Spleen (tissue), 13 donors: ENCODE measurements at regions of chr17 and their contacts with region 1.

Region 1: DNA sequence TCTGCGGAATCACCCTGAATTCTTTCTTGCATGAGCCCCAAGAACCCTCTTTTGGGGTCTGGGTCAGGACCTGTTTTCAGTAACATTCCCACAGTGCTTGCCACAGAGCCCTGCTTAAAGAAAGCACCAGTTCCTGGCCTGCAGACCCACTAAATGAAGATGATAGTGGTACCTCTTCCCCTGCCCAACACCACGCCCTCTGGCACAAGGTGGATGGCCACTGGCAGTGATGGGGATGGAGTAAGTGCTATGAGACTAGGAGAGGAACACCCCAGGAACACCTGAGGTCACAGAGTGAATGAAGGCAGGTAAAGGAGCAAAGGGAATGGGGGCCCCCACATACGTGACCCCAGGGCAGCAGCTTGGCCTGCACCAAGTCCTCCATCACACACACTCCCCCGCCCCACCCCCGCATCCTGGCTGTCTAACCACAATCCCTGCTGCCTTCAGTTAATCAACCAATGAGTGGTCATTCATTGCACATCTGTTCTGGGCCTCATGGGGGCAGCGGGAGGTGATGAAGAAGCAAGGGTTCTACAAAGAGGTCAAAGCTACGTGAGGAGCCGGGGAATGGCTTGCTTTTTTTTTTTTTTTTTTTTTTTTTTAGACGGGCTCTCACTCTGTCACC is 3.9 kb upstream of the PPY start:
- DNase-seq: no peak
- H3K4me3 ChIP-seq: no peak overlapping the region
- H3K27ac ChIP-seq: no peak overlapping the region
- H3K4me1 ChIP-seq: peaks cover 0 to 7% (median 0%) of the 10 kb centered on the region in 6 donors
- H3K27me3 ChIP-seq: peaks cover 0 to 34% (median 6%) of the 10 kb centered on the region in 7 donors
- CTCF ChIP-seq: no peak
- POLR2A ChIP-seq: no peak

Region 2: DNA sequence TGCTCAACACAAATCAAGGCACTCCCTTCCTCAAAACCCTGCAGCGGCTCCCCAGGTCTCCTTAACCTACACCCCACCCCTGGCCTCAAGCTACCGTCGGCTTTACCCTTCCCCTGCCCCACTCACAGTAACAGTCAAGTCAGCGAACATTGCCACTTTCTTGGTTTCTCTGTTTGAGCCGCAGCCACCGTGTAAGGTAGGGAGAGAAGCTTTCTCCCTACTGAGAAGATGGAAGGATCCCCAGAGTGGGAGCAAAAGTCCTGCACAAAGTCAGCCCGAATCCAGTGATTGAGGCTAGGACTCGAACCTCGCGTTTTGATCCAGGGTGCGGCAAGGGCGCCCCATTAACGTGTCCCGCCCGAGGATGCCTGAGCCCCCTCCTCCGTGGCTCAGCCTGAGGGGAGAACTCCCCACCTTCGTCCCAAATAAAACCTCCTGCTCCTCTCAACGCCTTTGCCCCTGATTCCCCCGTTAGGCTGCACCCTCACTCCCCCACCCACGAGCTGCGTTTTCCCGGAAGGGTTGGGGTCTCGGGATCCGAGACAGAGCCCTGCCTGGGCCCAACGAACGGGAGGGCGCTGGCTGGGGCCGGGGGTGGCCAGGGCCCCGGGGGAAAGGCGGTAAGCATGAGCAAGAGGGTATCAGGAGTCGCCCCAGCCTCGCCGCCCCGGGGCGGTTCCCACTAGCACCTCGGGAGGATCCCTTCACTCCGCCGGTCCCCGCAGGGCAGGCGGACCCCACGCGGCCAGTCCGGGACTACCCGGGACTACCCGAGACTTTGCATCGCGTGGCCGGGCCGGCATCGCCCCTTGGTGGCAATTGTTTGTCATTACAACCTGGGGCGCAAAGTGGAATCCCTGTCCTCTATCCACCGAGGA is 48.3 kb after region 1 on chr17:
- intact Hi-C with region 1: loop called (anchors 5 kb)
- DNase-seq: peak; percentile 84
- H3K4me3 ChIP-seq: peak overlapping the region in 3 of 8 donors; percentile 11 to 56 (median 22)
- H3K27ac ChIP-seq: no peak overlapping the region
- H3K4me1 ChIP-seq: peaks cover 0 to 11% (median 7%) of the 10 kb centered on the region in 6 donors
- H3K27me3 ChIP-seq: peaks cover 0 to 31% (median 13%) of the 10 kb centered on the region in 7 donors
- CTCF ChIP-seq: peak; percentile 59 to 83 (median 71)
- POLR2A ChIP-seq: no peak

Region 3: GRCh38 chr17:44039829-44040635 is 93.8 kb after region 1 on chr17:
- intact Hi-C with region 1: loop called (anchors 2 kb)
- DNase-seq: no peak
- H3K4me3 ChIP-seq: no peak overlapping the region
- H3K27ac ChIP-seq: no peak overlapping the region
- H3K4me1 ChIP-seq: peaks cover 0 to 46% (median 28%) of the 10 kb centered on the region in 6 donors
- H3K27me3 ChIP-seq: no peaks in the 10 kb centered on the region
- CTCF ChIP-seq: no peak
- POLR2A ChIP-seq: no peak